Heart left ventricle (tissue), 16 donors: ENCODE measurements at regions of chr3 and their contacts with region 1.

Region 1: GRCh38 chr3:189099505-189100290 is 72.1 kb upstream of the TPRG1 start:
- DNase-seq: peak in 4 of 5 donors; percentile 27 to 69 (median 33)
- ATAC-seq: peak; percentile 43 to 80 (median 64)
- H3K4me3 ChIP-seq: peak overlapping the region in 3 of 12 donors; percentile 1 to 26 (median 13)
- H3K27ac ChIP-seq: peak overlapping the region in 11 of 12 donors; percentile 23 to 88 (median 75)
- H3K4me1 ChIP-seq: peaks cover 0 to 21% (median 2%) of the 10 kb centered on the region in 12 donors
- H3K27me3 ChIP-seq: no peaks in the 10 kb centered on the region
- CTCF ChIP-seq: no peak
- POLR2A ChIP-seq: no peak

Region 2: GRCh38 chr3:189123595-189124387 is 24.1 kb after region 1 on chr3:
- intact Hi-C with region 1: loop called in 1 of 10 experiments (anchors 2 kb)
- DNase-seq: peak; percentile 58 to 82 (median 64)
- ATAC-seq: peak; percentile 81 to 97 (median 94)
- H3K4me3 ChIP-seq: peak overlapping the region in 2 of 12 donors; percentile 17 to 35
- H3K27ac ChIP-seq: peak overlapping the region; percentile 1 to 76 (median 57)
- H3K4me1 ChIP-seq: peaks cover 0 to 35% (median 19%) of the 10 kb centered on the region in 12 donors
- H3K27me3 ChIP-seq: no peaks in the 10 kb centered on the region
- CTCF ChIP-seq: no peak
- POLR2A ChIP-seq: no peak

Region 3: DNA sequence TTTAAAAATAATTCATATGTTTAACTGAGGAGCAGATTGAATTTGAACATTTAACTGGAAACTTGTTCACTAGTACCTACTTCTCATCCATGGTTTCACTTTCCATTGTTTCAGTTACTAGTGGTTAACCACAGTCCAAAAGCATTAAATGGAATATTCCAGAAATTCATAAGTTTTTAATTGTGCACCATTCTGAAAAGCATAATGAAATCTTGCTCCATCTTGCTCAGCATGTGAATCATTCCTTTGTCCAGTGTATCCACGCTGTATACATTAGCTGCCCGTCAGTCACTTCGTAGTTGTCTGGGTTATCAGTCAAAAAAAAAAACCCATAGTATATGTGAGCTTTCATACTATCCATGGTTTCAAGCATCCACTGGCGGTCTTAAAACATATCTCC is 289.6 kb after region 1 on chr3:
- intact Hi-C with region 1: no loop called
- DNase-seq: no peak
- ATAC-seq: no peak
- H3K4me3 ChIP-seq: no peak overlapping the region
- H3K27ac ChIP-seq: no peak overlapping the region
- H3K4me1 ChIP-seq: no peaks in the 10 kb centered on the region
- H3K27me3 ChIP-seq: no peaks in the 10 kb centered on the region
- CTCF ChIP-seq: no peak
- POLR2A ChIP-seq: no peak